PC-3 (cell line): ENCODE measurements at regions of chr4 and their contacts with region 1.

Region 1: GRCh38 chr4:78569291-78569821 is 17.8 kb downstream of the ANXA3 start:
- DNase-seq: peak; percentile 92
- ATAC-seq: peak; percentile 70
- H3K4me3 ChIP-seq: peak overlapping the region; percentile 40; the same call in 1 of the 2 replicates
- H3K27ac ChIP-seq: peak overlapping the region; percentile 49
- H3K4me1 ChIP-seq: peaks cover 54% of the 10 kb centered on the region
- H3K27me3 ChIP-seq: no peaks in the 10 kb centered on the region
- CTCF ChIP-seq: no peak

Region 2: DNA sequence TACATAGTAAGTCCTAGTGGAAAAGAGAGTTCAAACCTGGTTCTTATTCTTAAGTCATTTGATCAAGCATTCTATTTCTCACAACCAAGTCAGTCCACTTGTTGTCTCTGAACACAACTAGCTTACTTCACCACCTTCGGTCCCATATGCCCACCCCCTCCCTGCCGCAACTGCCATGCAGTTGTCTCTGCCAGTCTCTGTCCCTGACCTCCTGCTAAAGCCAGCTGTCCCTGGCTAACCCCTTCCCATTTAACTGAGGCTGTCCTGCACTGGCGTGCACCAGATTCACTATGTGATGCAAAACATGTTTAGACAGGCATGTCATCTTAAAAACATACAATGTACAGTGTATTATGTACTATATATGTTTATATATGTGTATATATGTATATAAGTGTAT is 499.5 kb before region 1 on chr4:
- CTCF ChIA-PET with region 1: no interaction called
- POLR2A ChIA-PET with region 1: no interaction called
- intact Hi-C with region 1: no loop called
- DNase-seq: no peak
- ATAC-seq: no peak
- H3K4me3 ChIP-seq: no peak overlapping the region
- H3K27ac ChIP-seq: no peak overlapping the region
- H3K4me1 ChIP-seq: no peaks in the 10 kb centered on the region
- H3K27me3 ChIP-seq: no peaks in the 10 kb centered on the region
- CTCF ChIP-seq: no peak

Region 3: DNA sequence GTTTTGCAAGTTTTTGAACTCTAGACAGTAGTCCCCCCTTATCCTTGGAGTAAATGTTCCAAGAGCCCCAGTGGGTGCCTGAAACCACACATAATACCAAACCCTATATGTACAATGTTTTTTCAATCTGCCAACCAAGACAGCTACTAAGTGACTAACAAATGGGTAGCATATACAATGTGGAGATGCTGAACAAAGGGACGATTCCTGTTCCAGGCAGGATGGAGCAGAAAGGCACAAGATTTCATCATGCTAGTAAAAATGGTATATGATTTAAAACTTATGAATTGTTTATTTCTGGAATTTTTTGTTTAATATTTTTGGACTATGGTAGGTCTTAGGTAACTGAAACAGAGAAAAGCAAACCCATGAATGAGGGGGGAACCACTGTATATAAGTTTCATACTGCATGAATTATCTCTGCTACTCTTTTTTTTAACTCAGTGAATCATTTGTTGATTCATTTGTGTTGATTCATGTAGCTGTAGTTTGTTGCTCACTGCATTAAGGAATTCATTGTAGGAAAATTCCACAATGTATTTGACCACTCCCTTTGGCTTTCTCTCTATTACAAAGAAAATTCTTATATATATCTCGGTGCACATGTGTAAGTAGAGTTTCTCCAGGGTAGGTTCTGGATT is 39.7 kb before region 1 on chr4:
- CTCF ChIA-PET with region 1: no interaction called
- POLR2A ChIA-PET with region 1: interaction called, 7 read pairs
- intact Hi-C with region 1: loop called (anchors 5 kb)
- DNase-seq: peak; percentile 79
- ATAC-seq: peak; percentile 66
- H3K4me3 ChIP-seq: no peak overlapping the region
- H3K27ac ChIP-seq: peak overlapping the region; percentile 88
- H3K4me1 ChIP-seq: peaks cover 49% of the 10 kb centered on the region
- H3K27me3 ChIP-seq: no peaks in the 10 kb centered on the region
- CTCF ChIP-seq: no peak

Region 4: DNA sequence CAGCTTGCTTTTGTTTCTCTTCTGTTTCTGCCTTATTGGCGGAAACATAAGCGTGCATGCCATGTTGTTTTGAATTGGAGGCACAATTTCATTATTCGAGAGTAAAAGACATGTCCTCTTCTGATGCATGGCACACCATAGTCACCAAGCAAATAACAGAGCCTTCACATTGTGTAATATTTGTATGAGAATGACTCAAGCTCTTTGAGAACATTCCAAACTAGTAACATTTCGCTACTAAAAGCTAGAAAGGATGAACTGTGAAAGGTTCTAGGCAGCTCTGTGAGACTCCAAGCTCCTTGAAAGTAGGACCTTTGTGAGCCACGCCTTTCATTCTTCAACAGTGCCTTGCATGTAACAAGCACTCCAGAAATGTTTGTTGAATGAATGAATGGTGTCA is 27.0 kb before region 1 on chr4:
- CTCF ChIA-PET with region 1: no interaction called
- POLR2A ChIA-PET with region 1: no interaction called
- intact Hi-C with region 1: no loop called
- DNase-seq: peak; percentile 85
- ATAC-seq: peak; percentile 70
- H3K4me3 ChIP-seq: no peak overlapping the region
- H3K27ac ChIP-seq: peak overlapping the region; percentile 72
- H3K4me1 ChIP-seq: peaks cover 46% of the 10 kb centered on the region
- H3K27me3 ChIP-seq: no peaks in the 10 kb centered on the region
- CTCF ChIP-seq: no peak

Region 5: DNA sequence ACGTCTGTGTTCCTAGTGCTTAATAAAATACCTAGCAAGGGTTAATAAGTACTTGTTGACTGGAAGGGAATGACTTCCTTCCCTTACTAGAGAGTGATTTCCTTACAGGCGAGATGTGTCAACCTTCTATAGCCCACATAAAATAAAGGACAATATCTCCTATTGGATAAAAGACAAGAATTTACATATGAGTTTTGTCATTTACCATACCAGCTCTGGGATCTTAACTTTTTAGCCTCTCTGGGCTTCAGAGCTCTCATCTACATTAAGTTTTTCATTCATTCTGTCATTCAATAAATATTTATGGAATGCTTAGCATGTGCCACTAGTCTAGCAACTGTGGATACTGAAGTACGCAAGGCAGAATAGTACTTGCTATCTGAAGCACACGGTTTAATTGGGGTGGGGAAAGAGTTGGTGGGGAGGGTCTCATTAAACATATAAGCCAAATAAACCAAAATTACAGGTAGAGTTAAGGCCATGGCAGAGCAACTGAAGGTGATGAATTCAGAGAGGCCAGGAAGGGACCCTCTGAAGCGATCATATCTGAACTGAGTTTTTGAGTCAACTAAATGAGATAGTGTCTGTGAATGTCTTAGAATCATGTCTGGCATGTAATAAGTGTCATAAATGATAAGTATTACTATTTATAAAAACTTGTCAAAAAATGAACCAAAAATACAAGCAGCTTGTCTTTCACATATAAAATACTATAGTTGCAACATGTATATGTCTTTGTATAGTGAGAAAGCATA is 115.1 kb after region 1 on chr4:
- CTCF ChIA-PET with region 1: no interaction called
- POLR2A ChIA-PET with region 1: no interaction called
- intact Hi-C with region 1: no loop called
- DNase-seq: peak; percentile 10
- ATAC-seq: no peak
- H3K4me3 ChIP-seq: no peak overlapping the region
- H3K27ac ChIP-seq: no peak overlapping the region
- H3K4me1 ChIP-seq: peaks cover 7% of the 10 kb centered on the region
- H3K27me3 ChIP-seq: no peaks in the 10 kb centered on the region
- CTCF ChIP-seq: no peak

Region 6: GRCh38 chr4:79053754-79054153 is 484.4 kb after region 1 on chr4:
- CTCF ChIA-PET with region 1: no interaction called
- POLR2A ChIA-PET with region 1: no interaction called
- intact Hi-C with region 1: no loop called
- DNase-seq: no peak
- ATAC-seq: no peak
- H3K4me3 ChIP-seq: no peak overlapping the region
- H3K27ac ChIP-seq: no peak overlapping the region
- H3K4me1 ChIP-seq: peaks cover 7% of the 10 kb centered on the region; the same call in 1 of the 2 replicates
- H3K27me3 ChIP-seq: 0 out of 2 replicates have a peak, but pooled peaks cover 14% of the 10 kb centered on the region
- CTCF ChIP-seq: no peak